ENCODE measurements at regions of chr11 and their contacts with region 1.

Region 1: DNA sequence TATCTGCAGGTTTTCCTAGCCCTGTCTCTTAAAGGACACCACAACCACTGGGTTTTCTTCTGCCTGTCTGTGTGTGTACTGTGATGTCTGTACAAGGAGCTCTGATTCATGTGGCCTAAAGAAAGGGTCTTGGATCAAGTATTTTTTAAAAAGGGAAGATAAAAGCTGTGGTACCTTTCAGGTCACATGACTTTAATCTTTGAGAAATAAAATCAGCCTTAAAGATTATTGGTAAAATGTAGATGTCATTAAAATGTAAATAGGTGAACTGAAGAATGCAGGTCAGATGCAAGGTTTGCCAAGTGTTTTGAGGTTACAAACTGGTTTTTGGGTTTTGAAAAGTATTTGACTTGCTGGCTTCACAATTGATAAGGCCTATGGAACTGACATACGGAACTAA is 257.4 kb downstream of the DLG2 start:
- DNase-seq: no peak
- H3K4me3 ChIP-seq: no peak overlapping the region
- H3K27ac ChIP-seq: no peak overlapping the region
- H3K4me1 ChIP-seq: no peaks in the 10 kb centered on the region
- CTCF ChIP-seq: no peak

Region 2: GRCh38 chr11:85355921-85356320 is 13.8 kb before region 1 on chr11:
- CTCF ChIA-PET with region 1: no interaction called
- POLR2A ChIA-PET with region 1: interaction called, 10 read pairs
- intact Hi-C with region 1: no loop called
- DNase-seq: no peak
- H3K4me3 ChIP-seq: no peak overlapping the region
- H3K27ac ChIP-seq: no peak overlapping the region
- H3K4me1 ChIP-seq: peaks cover 3% of the 10 kb centered on the region
- CTCF ChIP-seq: no peak

Measured in OCI-LY7 (cell line).